CD8-positive, alpha-beta T cell (primary cell): ENCODE measurements at regions of chr18 and their contacts with region 1.

Region 1: GRCh38 chr18:46660955-46661749 is 4.1 kb upstream of the LOXHD1 start:
- DNase-seq: no peak
- ATAC-seq: no peak
- H3K4me3 ChIP-seq: no peak overlapping the region
- H3K4me3 Mint-ChIP-seq: no peak overlapping the region
- H3K27ac ChIP-seq: no peak overlapping the region
- H3K27ac Mint-ChIP-seq: no peak overlapping the region
- H3K4me1 ChIP-seq: no peaks in the 10 kb centered on the region
- H3K4me1 Mint-ChIP-seq: no peaks in the 10 kb centered on the region
- H3K27me3 ChIP-seq: no peaks in the 10 kb centered on the region
- H3K27me3 Mint-ChIP-seq: peaks cover 9% of the 10 kb centered on the region
- CTCF ChIP-seq: no peak

Region 2: GRCh38 chr18:46148810-46149209 is 512.3 kb before region 1 on chr18:
- CTCF ChIA-PET with region 1: interaction called, 118 read pairs
- POLR2A ChIA-PET with region 1: no interaction called
- intact Hi-C with region 1: loop called (anchors 1 kb)
- DNase-seq: peak in 7 of 9 experiments; percentile 19 to 68 (median 54)
- ATAC-seq: peak; percentile 66
- H3K4me3 ChIP-seq: no peak overlapping the region
- H3K4me3 Mint-ChIP-seq: no peak overlapping the region
- H3K27ac ChIP-seq: no peak overlapping the region
- H3K27ac Mint-ChIP-seq: no peak overlapping the region
- H3K4me1 ChIP-seq: peaks cover 41% of the 10 kb centered on the region
- H3K4me1 Mint-ChIP-seq: peaks cover 40% of the 10 kb centered on the region
- H3K27me3 ChIP-seq: no peaks in the 10 kb centered on the region
- H3K27me3 Mint-ChIP-seq: no peaks in the 10 kb centered on the region
- CTCF ChIP-seq: peak; percentile 82

Region 3: GRCh38 chr18:46281185-46282176 is 379.7 kb before region 1 on chr18:
- CTCF ChIA-PET with region 1: interaction called, 89 read pairs
- POLR2A ChIA-PET with region 1: interaction called, 3 read pairs
- intact Hi-C with region 1: loop called in 1 of 2 experiments (anchors 1 kb)
- DNase-seq: peak; percentile 10 to 66 (median 56)
- ATAC-seq: peak; percentile 93
- H3K4me3 ChIP-seq: no peak overlapping the region
- H3K4me3 Mint-ChIP-seq: no peak overlapping the region
- H3K27ac ChIP-seq: no peak overlapping the region
- H3K27ac Mint-ChIP-seq: no peak overlapping the region
- H3K4me1 ChIP-seq: no peaks in the 10 kb centered on the region
- H3K4me1 Mint-ChIP-seq: peaks cover 13% of the 10 kb centered on the region
- H3K27me3 ChIP-seq: no peaks in the 10 kb centered on the region
- H3K27me3 Mint-ChIP-seq: no peaks in the 10 kb centered on the region
- CTCF ChIP-seq: peak; percentile 81

Region 4: DNA sequence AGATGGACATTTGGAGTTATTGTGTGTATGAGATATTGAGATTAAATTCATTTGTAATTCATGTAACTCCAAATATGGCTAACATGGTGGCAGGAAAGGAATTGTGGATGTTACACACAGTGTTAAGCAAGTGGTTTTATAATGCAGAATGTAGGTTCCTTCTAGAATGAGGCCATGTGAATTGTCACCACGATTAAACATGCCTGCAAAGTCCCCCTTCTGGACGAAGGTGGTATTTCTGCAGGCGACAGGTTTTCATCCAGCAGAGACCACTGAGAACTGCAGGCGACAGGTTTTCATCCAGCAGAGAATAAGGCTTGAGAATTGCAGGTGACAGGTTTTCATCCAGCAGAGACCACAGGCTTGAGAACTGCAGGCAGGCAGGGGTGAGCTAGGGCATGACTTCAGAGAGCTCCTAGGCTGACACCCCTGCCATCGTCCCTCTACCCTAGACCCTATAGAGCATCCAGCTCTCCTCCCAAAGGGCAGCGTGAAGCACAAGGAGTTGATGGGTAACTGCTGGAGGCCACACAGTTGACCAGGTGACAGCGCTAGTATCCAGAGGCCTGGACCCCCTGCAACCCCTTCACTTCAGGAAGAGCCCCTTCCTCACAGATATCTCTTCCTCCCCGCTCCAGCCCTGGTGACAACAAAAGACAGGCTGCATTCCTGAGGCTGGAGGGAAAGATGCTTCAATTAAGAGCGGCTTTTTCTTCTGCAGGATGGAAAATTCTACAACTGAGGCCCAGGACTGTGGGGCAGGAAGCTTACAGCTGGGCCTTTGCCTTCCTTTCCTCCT is 179.9 kb before region 1 on chr18:
- CTCF ChIA-PET with region 1: interaction called, 29 read pairs
- POLR2A ChIA-PET with region 1: no interaction called
- intact Hi-C with region 1: loop called in 1 of 2 experiments (anchors 10 kb)
- DNase-seq: peak; percentile 8 to 69 (median 56)
- ATAC-seq: peak; percentile 64
- H3K4me3 ChIP-seq: no peak overlapping the region
- H3K4me3 Mint-ChIP-seq: no peak overlapping the region
- H3K27ac ChIP-seq: no peak overlapping the region
- H3K27ac Mint-ChIP-seq: no peak overlapping the region
- H3K4me1 ChIP-seq: no peaks in the 10 kb centered on the region
- H3K4me1 Mint-ChIP-seq: no peaks in the 10 kb centered on the region
- H3K27me3 ChIP-seq: no peaks in the 10 kb centered on the region
- H3K27me3 Mint-ChIP-seq: peaks cover 13% of the 10 kb centered on the region
- CTCF ChIP-seq: peak; percentile 68

Region 5: GRCh38 chr18:46622999-46623398 is 38.2 kb before region 1 on chr18:
- CTCF ChIA-PET with region 1: interaction called, 24 read pairs
- POLR2A ChIA-PET with region 1: interaction called, 3 read pairs
- intact Hi-C with region 1: no loop called
- DNase-seq: peak in 1 of 9 experiments; percentile 17
- ATAC-seq: no peak
- H3K4me3 ChIP-seq: no peak overlapping the region
- H3K4me3 Mint-ChIP-seq: peak overlapping the region; percentile 26
- H3K27ac ChIP-seq: peak overlapping the region in 1 of 2 experiments; percentile 34
- H3K27ac Mint-ChIP-seq: peak overlapping the region; percentile 92
- H3K4me1 ChIP-seq: peaks cover 35% of the 10 kb centered on the region
- H3K4me1 Mint-ChIP-seq: peaks cover 50% of the 10 kb centered on the region
- H3K27me3 ChIP-seq: no peaks in the 10 kb centered on the region
- H3K27me3 Mint-ChIP-seq: no peaks in the 10 kb centered on the region
- CTCF ChIP-seq: no peak

Region 6: DNA sequence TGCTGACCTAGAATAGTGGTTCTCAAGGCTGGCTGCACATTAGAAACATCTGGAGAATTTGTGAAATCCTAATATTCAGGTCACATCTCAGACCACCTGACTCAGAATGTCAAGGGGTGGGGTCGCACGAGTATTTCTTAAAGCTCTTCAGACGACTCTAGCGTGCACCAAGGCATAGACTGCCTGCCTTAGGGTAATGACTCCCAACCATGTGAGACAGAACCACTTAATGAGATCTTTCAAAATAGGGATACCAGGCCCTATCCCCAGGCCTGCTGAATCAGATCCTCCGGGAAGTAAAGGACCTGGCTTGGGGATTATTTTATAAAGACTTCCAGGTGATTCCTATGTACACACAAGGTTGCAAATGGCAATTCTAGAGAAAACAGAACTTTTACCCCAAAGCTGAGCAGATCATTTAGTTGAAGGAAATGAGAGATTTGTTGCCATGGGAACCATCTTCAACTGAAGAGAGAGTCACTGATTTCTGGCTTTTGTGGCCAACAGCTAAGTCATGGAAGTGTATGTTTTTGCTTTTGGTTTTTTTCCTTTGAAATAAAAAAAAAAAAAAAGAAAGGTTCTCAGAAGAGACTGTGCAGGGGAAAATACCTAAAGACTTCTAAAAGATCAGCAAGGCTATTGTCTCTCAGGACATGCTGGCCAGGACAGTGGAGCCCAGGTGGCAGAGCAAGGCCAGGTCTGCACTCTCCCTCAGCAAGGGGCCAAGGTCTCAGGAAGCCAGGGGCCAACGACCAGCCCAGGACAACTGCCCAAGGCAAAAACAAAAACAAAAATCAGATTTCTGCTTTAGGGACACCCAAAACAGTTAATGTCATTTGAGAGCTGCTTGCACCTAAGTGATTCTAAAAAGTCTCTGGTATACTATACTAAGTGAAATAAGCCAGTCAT is 11.2 kb after region 1 on chr18:
- CTCF ChIA-PET with region 1: interaction called, 16 read pairs
- POLR2A ChIA-PET with region 1: no interaction called
- intact Hi-C with region 1: no loop called
- DNase-seq: peak in 2 of 9 experiments; percentile 39 to 73
- ATAC-seq: peak; percentile 65
- H3K4me3 ChIP-seq: no peak overlapping the region
- H3K4me3 Mint-ChIP-seq: no peak overlapping the region
- H3K27ac ChIP-seq: no peak overlapping the region
- H3K27ac Mint-ChIP-seq: peak overlapping the region; percentile 66
- H3K4me1 ChIP-seq: peaks cover 14% of the 10 kb centered on the region
- H3K4me1 Mint-ChIP-seq: peaks cover 13% of the 10 kb centered on the region
- H3K27me3 ChIP-seq: no peaks in the 10 kb centered on the region
- H3K27me3 Mint-ChIP-seq: peaks cover 7% of the 10 kb centered on the region
- CTCF ChIP-seq: no peak

Region 7: DNA sequence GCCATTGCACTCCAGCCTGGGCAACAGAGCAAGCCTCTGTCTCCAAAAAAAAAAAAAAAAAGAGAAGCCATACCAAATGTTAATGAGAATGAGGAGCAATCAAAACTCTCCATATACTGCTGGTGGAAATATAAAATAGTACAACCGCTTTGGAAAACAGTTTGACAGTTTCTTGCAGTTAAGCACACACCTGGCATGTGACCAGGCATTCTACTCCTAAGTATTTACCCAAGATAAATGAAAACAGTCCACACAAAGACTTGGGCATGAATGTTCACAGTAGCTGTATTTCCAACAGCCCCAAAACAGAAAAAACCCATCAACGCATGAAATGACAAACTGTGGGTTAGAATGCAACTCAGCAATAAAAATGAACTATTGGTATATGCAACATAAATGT is 171.7 kb after region 1 on chr18:
- CTCF ChIA-PET with region 1: no interaction called
- POLR2A ChIA-PET with region 1: no interaction called
- intact Hi-C with region 1: no loop called
- DNase-seq: no peak
- ATAC-seq: no peak
- H3K4me3 ChIP-seq: no peak overlapping the region
- H3K4me3 Mint-ChIP-seq: no peak overlapping the region
- H3K27ac ChIP-seq: no peak overlapping the region
- H3K27ac Mint-ChIP-seq: no peak overlapping the region
- H3K4me1 ChIP-seq: no peaks in the 10 kb centered on the region
- H3K4me1 Mint-ChIP-seq: no peaks in the 10 kb centered on the region
- H3K27me3 ChIP-seq: no peaks in the 10 kb centered on the region
- H3K27me3 Mint-ChIP-seq: no peaks in the 10 kb centered on the region
- CTCF ChIP-seq: no peak